HEK293T (cell line): ENCODE measurements at regions of chr11 and their contacts with region 1.

Region 1: GRCh38 chr11:120335908-120336640 is at the start of gene ARHGEF12:
- DNase-seq: peak; percentile 87

Region 2: DNA sequence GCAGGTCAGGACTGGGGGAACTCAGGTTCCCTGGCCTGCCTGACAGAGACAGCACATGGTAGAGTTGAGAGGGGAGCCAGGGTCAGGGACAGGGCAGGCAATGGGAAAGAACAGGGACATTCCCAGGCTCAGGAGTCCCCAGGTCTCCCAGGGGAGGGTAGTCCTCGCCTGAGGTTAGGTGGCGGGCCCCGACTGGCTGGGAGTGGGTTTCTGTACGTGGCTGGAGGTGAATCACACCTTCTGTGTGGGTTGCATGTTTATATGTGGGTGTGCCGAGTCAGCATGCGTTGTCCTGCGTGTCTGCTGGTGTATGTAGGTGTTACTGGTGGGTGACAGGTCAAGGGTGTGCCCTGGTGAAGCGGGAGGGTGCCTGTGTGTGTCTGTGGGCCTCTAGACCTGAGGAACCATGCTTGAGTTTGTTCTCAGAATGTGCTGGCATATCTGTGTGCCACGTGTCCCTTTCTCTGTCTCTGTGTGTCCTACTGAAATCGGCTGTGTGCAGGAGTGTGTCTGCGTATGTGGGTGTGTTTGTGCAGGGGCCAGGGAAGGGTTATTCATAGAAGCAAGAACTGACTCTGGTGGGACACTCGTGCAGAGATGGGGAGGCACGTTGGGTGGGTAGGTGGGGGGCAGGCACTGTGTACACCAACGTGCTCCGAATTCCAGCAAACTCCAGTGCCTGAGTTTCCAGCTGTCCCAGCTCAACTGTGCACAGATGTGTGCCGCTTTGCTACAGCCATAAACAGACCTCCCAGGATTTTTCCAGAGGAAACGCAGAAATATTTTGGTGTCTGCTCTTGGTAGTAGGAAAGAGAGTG is 149.1 kb before region 1 on chr11:
- CTCF ChIA-PET with region 1: no interaction called
- POLR2A ChIA-PET with region 1: no interaction called
- DNase-seq: no peak

Region 3: GRCh38 chr11:120346233-120346632 is 10.2 kb after region 1 on chr11:
- CTCF ChIA-PET with region 1: interaction called, 4 read pairs
- POLR2A ChIA-PET with region 1: interaction called, 21 read pairs
- DNase-seq: no peak

Region 4: GRCh38 chr11:120400564-120401364 is 64.7 kb after region 1 on chr11:
- CTCF ChIA-PET with region 1: interaction called, 3 read pairs
- POLR2A ChIA-PET with region 1: interaction called, 13 read pairs
- DNase-seq: peak; percentile 30

Region 5: GRCh38 chr11:120540744-120541465 is 204.8 kb after region 1 on chr11:
- CTCF ChIA-PET with region 1: no interaction called
- POLR2A ChIA-PET with region 1: no interaction called
- DNase-seq: no peak